ENCODE measurements at regions of chr14 and their contacts with region 1.

Region 1: GRCh38 chr14:24188251-24189058 is at the start of gene IPO4:
- H3K4me3 ChIP-seq: peak within 1 kb of the TSS; percentile 84
- H3K27ac ChIP-seq: peak within 1 kb of the TSS; percentile 87
- H3K4me1 ChIP-seq: peaks cover 7% of the 10 kb centered on the region; the same call in 1 of the 2 replicates
- CTCF ChIP-seq: no peak; the same call in 1 of the 2 replicates

Region 2: DNA sequence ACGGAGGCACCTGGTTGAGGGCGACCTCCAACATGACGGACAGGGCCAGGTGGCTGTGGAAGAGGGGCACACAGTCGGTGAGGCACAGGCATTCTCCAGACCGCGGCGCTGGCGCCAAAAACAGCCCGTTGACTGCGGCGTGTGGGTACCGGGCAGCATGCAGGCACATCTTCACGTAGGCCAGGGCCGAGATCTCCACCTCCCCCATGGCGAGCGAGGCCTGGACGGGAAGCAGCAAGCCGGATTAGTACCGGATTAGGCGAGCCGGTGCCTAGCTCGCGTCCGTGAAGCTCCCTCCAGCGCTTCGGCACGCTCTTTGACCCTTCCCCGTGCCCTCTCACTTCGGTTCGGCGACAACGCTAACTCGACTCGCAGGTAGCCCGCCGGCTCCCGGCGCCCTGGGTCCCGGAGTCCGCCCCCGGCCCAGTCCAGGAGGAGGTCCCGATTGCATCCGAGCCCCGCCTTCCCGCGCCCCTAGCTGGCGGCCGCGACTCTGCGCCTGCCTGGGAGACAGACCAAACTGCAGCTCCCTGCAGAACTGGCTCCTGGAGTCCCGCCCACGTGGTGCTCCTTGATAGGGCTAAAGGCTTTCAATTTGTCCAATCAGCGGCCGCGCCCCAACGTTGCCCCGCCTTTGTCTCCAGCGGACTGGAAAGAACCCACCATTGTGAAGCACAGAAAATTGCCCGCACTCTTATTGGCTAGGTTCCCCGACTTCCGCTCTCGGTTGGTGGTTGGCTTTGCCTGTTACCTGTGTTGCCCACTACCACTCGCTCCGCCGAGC is 47.2 kb before region 1 on chr14 and contains the start of gene EMC9:
- CTCF ChIA-PET with region 1: no interaction called
- POLR2A ChIA-PET with region 1: interaction called, 10 read pairs
- H3K4me3 ChIP-seq: peak within 1 kb of the TSS; percentile 90
- H3K27ac ChIP-seq: peak within 1 kb of the TSS; percentile 89
- H3K4me1 ChIP-seq: peaks cover 8% of the 10 kb centered on the region
- CTCF ChIP-seq: peak; percentile 78